CD4-positive, alpha-beta T cell (primary cell): ENCODE measurements at regions of chr6 and their contacts with region 1.

Region 1: GRCh38 chr6:158793432-158793831 is 25.7 kb downstream of the EZR start:
- DNase-seq: peak in 5 of 14 experiments; percentile 3 to 69 (median 65)
- ATAC-seq: peak; percentile 28
- H3K4me3 ChIP-seq: no peak overlapping the region
- H3K4me3 Mint-ChIP-seq: peak overlapping the region; percentile 42
- H3K27ac ChIP-seq: no peak overlapping the region
- H3K27ac Mint-ChIP-seq: peak overlapping the region; percentile 66
- H3K4me1 ChIP-seq: peaks cover 76% of the 10 kb centered on the region
- H3K4me1 Mint-ChIP-seq: peaks cover 88% of the 10 kb centered on the region
- H3K27me3 ChIP-seq: no peaks in the 10 kb centered on the region
- H3K27me3 Mint-ChIP-seq: no peaks in the 10 kb centered on the region
- CTCF ChIP-seq: peak; percentile 51

Region 2: DNA sequence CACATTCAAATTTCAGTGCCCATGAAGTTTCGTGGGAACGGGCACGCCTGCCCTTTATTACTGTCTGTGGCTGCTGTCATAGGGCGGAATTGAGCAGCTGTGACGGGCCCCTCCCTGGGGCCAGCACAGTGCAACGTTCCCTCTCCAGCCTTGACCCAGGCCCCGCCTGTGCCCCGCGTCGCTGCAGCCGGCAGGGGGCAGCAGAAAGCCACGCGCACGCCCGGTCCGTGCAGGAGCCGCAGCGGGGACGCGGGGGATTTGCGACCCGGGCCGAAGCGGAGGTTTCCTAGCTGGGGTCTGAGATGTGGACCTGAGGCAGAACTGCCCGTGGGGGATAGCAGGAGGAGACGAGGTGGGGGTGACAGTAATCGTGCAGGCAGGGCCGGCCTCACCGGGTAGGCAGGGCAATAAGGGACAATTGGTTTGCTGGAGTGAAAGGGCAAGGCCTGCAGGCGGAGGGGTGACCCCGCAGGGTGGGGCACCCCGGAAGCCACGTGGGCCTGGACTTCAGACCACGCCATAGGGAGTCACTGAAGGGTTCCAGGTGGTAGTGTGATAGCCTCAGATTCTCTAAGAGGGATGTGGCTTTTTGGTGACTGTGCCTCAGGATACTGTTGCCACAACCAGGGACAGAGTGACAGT is 89.1 kb before region 1 on chr6:
- CTCF ChIA-PET with region 1: interaction called, 4 read pairs
- POLR2A ChIA-PET with region 1: no interaction called
- intact Hi-C with region 1: loop called in 1 of 2 experiments (anchors 5 kb)
- DNase-seq: peak; percentile 43 to 89 (median 74)
- ATAC-seq: peak; percentile 96
- H3K4me3 ChIP-seq: peak overlapping the region; percentile 44
- H3K4me3 Mint-ChIP-seq: peak overlapping the region; percentile 69
- H3K27ac ChIP-seq: no peak overlapping the region
- H3K27ac Mint-ChIP-seq: no peak overlapping the region
- H3K4me1 ChIP-seq: peaks cover 17% of the 10 kb centered on the region
- H3K4me1 Mint-ChIP-seq: peaks cover 6% of the 10 kb centered on the region
- H3K27me3 ChIP-seq: no peaks in the 10 kb centered on the region
- H3K27me3 Mint-ChIP-seq: no peaks in the 10 kb centered on the region
- CTCF ChIP-seq: peak; percentile 99

Region 3: GRCh38 chr6:158803733-158804143 is 10.3 kb after region 1 on chr6:
- CTCF ChIA-PET with region 1: interaction called, 5 read pairs
- POLR2A ChIA-PET with region 1: interaction called, 15 read pairs
- intact Hi-C with region 1: no loop called
- DNase-seq: peak in 7 of 14 experiments; percentile 29 to 90 (median 45)
- ATAC-seq: peak; percentile 60
- H3K4me3 ChIP-seq: peak overlapping the region; percentile 45
- H3K4me3 Mint-ChIP-seq: peak overlapping the region; percentile 77
- H3K27ac ChIP-seq: peak overlapping the region; percentile 21 to 82
- H3K27ac Mint-ChIP-seq: peak overlapping the region; percentile 75
- H3K4me1 ChIP-seq: peaks cover 80% of the 10 kb centered on the region
- H3K4me1 Mint-ChIP-seq: peaks cover 100% of the 10 kb centered on the region
- H3K27me3 ChIP-seq: no peaks in the 10 kb centered on the region
- H3K27me3 Mint-ChIP-seq: no peaks in the 10 kb centered on the region
- CTCF ChIP-seq: no peak

Region 4: DNA sequence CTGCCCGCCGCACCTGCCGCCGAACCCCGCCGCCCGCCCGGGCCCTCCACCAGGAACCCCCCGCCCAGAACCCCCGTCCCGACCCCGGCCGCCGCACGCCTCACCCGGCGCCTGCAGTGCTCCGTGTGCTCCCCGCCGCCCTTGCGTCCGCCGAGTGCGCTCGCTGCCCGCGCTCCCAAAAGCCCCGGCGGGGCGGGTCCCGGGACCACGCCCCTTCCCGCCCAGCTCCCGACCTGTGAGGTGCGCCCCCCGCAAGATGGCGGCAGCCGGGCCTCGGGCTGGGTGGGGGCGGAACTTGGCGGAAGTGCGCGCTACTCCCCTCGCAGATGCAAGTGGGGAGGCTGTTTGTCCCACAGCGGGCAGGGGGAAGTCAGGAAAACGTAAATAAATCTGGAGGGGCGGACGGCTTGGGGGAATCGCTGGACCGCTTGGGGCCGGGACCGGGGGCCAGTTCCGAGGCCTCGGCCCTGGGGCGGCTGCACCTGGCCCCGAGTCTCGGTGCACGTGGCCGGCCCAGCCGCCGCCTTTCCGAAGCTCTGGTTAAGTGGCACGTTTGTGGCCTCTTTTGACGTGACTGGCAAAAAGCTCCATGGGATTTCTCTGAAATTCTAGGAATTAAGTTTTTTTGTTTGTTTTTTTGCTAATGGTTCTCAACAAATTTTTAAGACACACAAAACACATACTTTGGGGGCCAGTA is 25.9 kb after region 1 on chr6 and contains the start of gene EZR:
- CTCF ChIA-PET with region 1: no interaction called
- POLR2A ChIA-PET with region 1: interaction called, 18 read pairs
- intact Hi-C with region 1: loop called in 1 of 2 experiments (anchors 1 kb)
- DNase-seq: peak; percentile 64 to 95 (median 80)
- ATAC-seq: peak; percentile 58
- H3K4me3 ChIP-seq: peak within 1 kb of the TSS; percentile 88
- H3K4me3 Mint-ChIP-seq: peak within 1 kb of the TSS; percentile 99
- H3K27ac ChIP-seq: peak within 1 kb of the TSS; percentile 96 to 97
- H3K27ac Mint-ChIP-seq: peak within 1 kb of the TSS; percentile 95
- H3K4me1 ChIP-seq: peaks cover 39% of the 10 kb centered on the region
- H3K4me1 Mint-ChIP-seq: peaks cover 49% of the 10 kb centered on the region
- H3K27me3 ChIP-seq: no peaks in the 10 kb centered on the region
- H3K27me3 Mint-ChIP-seq: no peaks in the 10 kb centered on the region
- CTCF ChIP-seq: no peak
- total RNA-seq, gene EZR: 434 to 449 TPM

Region 5: GRCh38 chr6:158972241-158973233 is 179.1 kb after region 1 on chr6:
- CTCF ChIA-PET with region 1: interaction called, 9 read pairs
- POLR2A ChIA-PET with region 1: interaction called, 4 read pairs
- intact Hi-C with region 1: loop called (anchors 1 to 2 kb)
- DNase-seq: peak in 3 of 14 experiments; percentile 70 to 78 (median 78)
- ATAC-seq: peak; percentile 61
- H3K4me3 ChIP-seq: no peak overlapping the region
- H3K4me3 Mint-ChIP-seq: no peak overlapping the region
- H3K27ac ChIP-seq: no peak overlapping the region
- H3K27ac Mint-ChIP-seq: no peak overlapping the region
- H3K4me1 ChIP-seq: no peaks in the 10 kb centered on the region
- H3K4me1 Mint-ChIP-seq: peaks cover 4% of the 10 kb centered on the region
- H3K27me3 ChIP-seq: no peaks in the 10 kb centered on the region
- H3K27me3 Mint-ChIP-seq: no peaks in the 10 kb centered on the region
- CTCF ChIP-seq: peak; percentile 88

Region 6: DNA sequence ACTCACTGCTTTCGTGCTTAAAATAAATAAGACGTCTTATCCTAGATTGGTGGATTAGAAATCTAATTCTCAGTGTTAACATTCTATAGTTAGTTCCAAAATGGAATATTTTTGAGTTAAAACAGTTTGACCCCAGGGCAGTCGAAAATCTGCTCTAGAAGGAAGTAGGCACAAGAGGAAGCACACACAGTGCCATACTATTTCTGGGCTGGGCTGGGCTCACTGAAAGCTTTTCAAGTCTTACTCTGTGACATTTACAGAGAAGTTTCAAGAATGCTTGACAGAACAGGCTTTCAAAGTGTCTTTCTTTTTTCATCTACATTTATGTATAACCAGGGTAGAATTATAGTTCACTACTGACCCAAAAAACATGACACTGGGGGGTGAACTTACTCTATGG is 689.8 kb after region 1 on chr6:
- CTCF ChIA-PET with region 1: no interaction called
- POLR2A ChIA-PET with region 1: no interaction called
- intact Hi-C with region 1: no loop called
- DNase-seq: no peak
- ATAC-seq: no peak
- H3K4me3 ChIP-seq: no peak overlapping the region
- H3K4me3 Mint-ChIP-seq: no peak overlapping the region
- H3K27ac ChIP-seq: no peak overlapping the region
- H3K27ac Mint-ChIP-seq: no peak overlapping the region
- H3K4me1 ChIP-seq: no peaks in the 10 kb centered on the region
- H3K4me1 Mint-ChIP-seq: no peaks in the 10 kb centered on the region
- H3K27me3 ChIP-seq: peaks cover 0 to 7% of the 10 kb centered on the region in 2 experiments
- H3K27me3 Mint-ChIP-seq: peaks cover 36% of the 10 kb centered on the region
- CTCF ChIP-seq: no peak